HAP-1 (cell line): ENCODE measurements at regions of chr11 and their contacts with region 1.

Region 1: GRCh38 chr11:27296497-27296896 is 66.5 kb downstream of the CCDC34 start:
- DNase-seq: peak; percentile 16 to 78
- H3K4me3 ChIP-seq: no peak overlapping the region
- H3K4me1 ChIP-seq: peaks cover 10% of the 10 kb centered on the region
- H3K27me3 ChIP-seq: no peaks in the 10 kb centered on the region

Region 2: DNA sequence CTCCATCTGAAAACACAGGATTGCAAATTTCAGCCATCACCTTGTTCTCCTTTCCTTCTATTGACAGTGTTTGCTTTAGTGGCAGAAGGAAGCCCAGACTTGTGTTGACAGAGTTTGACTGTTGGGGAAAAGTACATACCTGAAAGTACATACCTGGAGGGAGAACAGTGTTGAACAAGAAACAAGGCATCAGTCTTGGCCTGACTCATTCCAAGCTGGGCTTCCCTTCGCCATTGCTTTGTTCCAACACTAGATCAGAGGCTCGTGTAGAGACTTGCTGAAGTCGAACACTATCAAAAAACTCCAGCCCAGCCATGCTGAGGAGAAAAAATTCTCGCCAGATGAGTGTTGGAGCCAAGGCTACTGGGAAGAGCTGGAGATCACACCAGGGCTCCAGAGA is 122.5 kb before region 1 on chr11:
- in situ Hi-C with region 1: no loop called
- DNase-seq: no peak
- H3K4me3 ChIP-seq: no peak overlapping the region
- H3K4me1 ChIP-seq: no peaks in the 10 kb centered on the region
- H3K27me3 ChIP-seq: peaks cover 10% of the 10 kb centered on the region

Region 3: DNA sequence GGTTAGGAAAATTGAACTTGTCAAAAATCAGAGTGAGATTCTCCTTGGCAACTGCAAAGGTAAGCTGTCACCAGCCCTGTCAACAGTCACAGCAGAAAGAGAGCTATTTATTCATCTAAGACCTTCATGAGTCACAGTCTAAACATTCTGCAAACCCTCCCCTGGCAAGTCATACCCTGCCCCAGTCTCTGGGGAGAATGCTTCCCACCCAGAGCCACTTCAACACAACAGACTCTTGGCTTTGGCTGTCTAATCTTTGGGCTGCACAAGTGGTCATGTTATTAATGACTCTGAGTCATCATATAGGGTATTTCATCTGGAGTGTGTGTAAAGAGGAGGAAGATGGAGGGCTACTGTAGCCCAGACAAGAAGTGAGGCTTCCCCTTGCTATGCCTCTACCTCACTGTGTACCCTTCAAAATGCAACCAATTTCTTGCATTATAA is 86.9 kb before region 1 on chr11:
- in situ Hi-C with region 1: loop called (anchors 10 kb)
- DNase-seq: peak in 1 of 2 experiments; percentile 32
- H3K4me3 ChIP-seq: no peak overlapping the region
- H3K4me1 ChIP-seq: peaks cover 38% of the 10 kb centered on the region
- H3K27me3 ChIP-seq: no peaks in the 10 kb centered on the region